AG04450 (cell line): ENCODE measurements at regions of chr1 and their contacts with region 1.

Region 1: DNA sequence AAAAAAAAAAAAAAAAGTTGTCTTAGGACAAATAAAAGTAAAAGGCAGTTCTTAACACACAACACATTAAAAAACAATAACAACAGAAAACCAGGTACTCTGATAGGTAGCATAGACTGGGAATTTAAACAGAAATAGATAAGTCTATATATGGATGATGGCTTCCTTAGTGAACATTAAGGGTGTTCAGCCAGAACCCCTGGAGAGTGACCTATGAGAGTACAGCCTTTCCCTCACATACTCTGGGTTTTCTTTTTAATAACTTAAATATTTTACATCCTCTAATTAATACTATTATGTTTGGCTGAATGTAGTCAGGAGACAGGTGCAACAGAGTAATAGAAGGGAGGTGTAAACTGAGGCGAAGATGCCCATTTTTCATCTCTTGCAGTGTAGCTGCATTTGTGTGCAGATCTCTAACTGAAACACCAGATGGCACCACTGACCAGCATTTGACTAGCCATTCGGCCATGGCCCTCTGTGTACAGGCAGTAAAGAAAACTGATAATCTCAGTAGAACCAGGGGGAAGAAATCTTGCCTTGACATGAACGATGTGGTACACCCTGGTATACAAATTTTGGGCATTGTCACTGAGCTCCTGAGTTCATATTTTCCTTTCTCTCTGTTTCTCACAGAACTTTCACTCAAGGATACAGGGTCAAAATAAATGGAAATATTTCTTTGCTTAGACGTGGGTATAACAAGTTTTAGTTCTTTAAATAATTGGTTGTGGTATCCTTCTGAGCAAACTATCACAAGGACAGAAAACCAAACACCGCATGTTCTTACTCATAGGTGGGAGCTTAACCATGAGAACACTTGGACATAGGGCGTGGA is 7.6 kb downstream of the TTF2 start:
- DNase-seq: peak; percentile 41
- H3K4me3 ChIP-seq: no peak overlapping the region
- H3K27ac ChIP-seq: no peak overlapping the region
- H3K27me3 ChIP-seq: no peaks in the 10 kb centered on the region
- CTCF ChIP-seq: peak; percentile 90

Region 2: DNA sequence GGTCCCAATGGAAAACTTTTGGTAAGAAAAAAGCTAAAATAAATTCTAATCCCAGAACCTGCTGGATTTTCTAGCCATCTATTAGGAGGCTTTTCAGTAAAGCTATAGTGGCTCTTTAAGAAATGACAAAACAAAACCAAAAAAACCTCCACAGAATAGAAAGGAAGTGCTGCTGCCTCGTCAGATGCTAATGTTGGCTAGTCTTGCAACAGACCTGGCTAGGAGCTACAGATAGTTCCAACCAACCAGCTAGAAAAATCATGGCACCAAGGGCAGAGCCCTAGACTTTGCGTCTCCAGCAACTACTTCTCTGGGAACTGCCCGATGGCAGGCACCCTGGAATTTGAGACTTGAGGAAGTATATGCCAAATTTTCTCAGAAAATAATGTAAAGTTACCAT is 58.6 kb before region 1 on chr1:
- CTCF ChIA-PET with region 1: no interaction called
- POLR2A ChIA-PET with region 1: no interaction called
- DNase-seq: no peak
- H3K4me3 ChIP-seq: no peak overlapping the region
- H3K27ac ChIP-seq: no peak overlapping the region
- H3K27me3 ChIP-seq: no peaks in the 10 kb centered on the region
- CTCF ChIP-seq: no peak

Region 3: GRCh38 chr1:117093870-117094621 is 26.3 kb after region 1 on chr1:
- CTCF ChIA-PET with region 1: interaction called, 96 read pairs
- POLR2A ChIA-PET with region 1: no interaction called
- DNase-seq: no peak
- H3K4me3 ChIP-seq: no peak overlapping the region
- H3K27ac ChIP-seq: peak overlapping the region; percentile 90
- H3K27me3 ChIP-seq: no peaks in the 10 kb centered on the region
- CTCF ChIP-seq: peak; percentile 29; the same call in 1 of the 2 replicates

Region 4: GRCh38 chr1:117121776-117122697 is 54.3 kb after region 1 on chr1:
- CTCF ChIA-PET with region 1: interaction called, 285 read pairs
- POLR2A ChIA-PET with region 1: no interaction called
- DNase-seq: peak; percentile 88
- H3K4me3 ChIP-seq: peak overlapping the region; percentile 87
- H3K27ac ChIP-seq: peak overlapping the region; percentile 91
- H3K27me3 ChIP-seq: peaks cover 10% of the 10 kb centered on the region
- CTCF ChIP-seq: peak; percentile 84

Region 5: GRCh38 chr1:117275055-117275454 is 207.3 kb after region 1 on chr1:
- CTCF ChIA-PET with region 1: interaction called, 15 read pairs
- POLR2A ChIA-PET with region 1: no interaction called
- DNase-seq: no peak
- H3K4me3 ChIP-seq: no peak overlapping the region
- H3K27ac ChIP-seq: no peak overlapping the region
- H3K27me3 ChIP-seq: peaks cover 5% of the 10 kb centered on the region
- CTCF ChIP-seq: no peak